Esophagus muscularis mucosa (tissue), 4 donors: ENCODE measurements at regions of chr13 and their contacts with region 1.

Region 1: GRCh38 chr13:109529964-109530363 is 256.4 kb downstream of the IRS2 start:
- DNase-seq: peak; percentile 31
- H3K4me3 ChIP-seq: no peak overlapping the region
- H3K27ac ChIP-seq: no peak overlapping the region
- H3K4me1 ChIP-seq: no peaks in the 10 kb centered on the region
- H3K27me3 ChIP-seq: no peaks in the 10 kb centered on the region
- CTCF ChIP-seq: no peak
- EP300 ChIP-seq: no peak
- POLR2A ChIP-seq: no peak

Region 2: GRCh38 chr13:109389892-109390345 is 140.0 kb before region 1 on chr13:
- intact Hi-C with region 1: loop called (anchors 10 kb)
- DNase-seq: no peak
- H3K4me3 ChIP-seq: no peak overlapping the region
- H3K27ac ChIP-seq: no peak overlapping the region
- H3K4me1 ChIP-seq: peaks cover 0 to 14% (median 0%) of the 10 kb centered on the region in 4 donors
- H3K27me3 ChIP-seq: no peaks in the 10 kb centered on the region
- CTCF ChIP-seq: no peak
- EP300 ChIP-seq: no peak
- POLR2A ChIP-seq: no peak